ENCODE measurements at regions of chr6 and their contacts with region 1.

Region 1: DNA sequence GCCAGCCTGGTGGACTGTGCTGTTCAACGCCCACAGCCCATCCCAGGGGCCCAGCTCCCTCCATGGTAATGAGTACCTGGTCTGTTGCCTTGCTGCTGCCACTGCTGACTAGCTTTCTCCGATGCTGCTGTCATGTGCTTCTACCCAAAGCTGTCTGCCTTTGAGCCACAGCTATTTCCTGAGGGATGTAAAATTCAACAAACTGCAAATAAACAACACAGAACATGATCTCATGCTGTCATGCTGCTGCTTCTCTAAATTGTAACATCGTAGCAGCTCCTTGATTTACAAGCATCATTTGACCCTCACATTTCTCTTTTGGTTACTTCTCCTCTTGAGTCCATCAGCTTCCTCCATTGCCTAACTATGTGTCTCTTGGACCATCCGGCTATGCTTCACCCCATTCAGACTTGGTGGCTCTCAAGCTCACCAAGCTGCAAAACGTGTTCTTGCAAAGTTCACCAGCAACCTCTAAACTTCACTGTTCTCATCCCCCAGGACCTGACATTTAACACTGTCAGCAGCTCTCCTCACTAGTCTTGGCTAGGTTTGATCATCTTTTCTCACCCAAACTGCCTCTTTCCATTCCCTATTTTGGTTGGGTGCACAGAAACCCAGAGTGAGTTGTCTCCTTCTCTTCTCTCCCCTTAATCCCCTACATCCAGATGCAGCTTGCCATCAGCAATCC is 54.6 kb downstream of the FYN start:
- DNase-seq: no peak
- CTCF ChIP-seq: no peak

Region 2: DNA sequence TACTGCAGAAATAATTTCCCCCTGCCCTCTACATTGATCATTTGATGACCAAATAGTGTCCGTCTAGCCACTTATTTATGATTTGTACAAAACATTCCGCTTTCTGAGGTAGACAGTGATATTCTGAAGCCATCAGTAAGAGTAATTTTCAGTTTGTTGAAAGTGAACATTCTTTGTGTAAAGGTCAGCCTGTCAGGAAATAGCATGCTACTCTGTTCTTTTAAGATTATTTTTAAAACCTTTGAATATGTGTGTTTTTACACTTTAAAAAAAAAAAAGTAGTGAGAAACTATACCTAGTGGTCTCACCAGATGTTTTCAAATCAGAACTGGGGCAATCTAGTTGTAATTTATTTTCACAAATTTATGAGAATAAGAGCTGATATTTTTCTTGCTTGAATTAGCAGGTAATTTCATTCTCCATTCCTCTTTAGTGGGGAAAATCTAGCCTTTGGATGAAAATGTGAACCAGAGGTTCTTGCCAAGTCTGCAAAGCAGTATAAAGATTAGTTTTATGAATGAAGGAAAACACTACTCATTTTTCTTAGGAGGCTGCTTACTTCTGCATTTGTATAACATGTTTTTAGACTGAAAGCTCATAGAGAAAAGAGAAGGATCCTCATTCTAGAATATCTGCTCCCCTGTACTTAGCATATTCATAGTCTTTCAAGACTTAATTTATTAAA is 323.6 kb before region 1 on chr6:
- CTCF ChIA-PET with region 1: no interaction called
- POLR2A ChIA-PET with region 1: no interaction called
- DNase-seq: no peak
- CTCF ChIP-seq: no peak

Region 3: GRCh38 chr6:111829998-111830397 is 11.3 kb after region 1 on chr6:
- CTCF ChIA-PET with region 1: interaction called, 24 read pairs
- POLR2A ChIA-PET with region 1: no interaction called
- DNase-seq: no peak
- CTCF ChIP-seq: no peak

Region 4: GRCh38 chr6:111838749-111839484 is 20.2 kb after region 1 on chr6:
- CTCF ChIA-PET with region 1: interaction called, 10 read pairs
- POLR2A ChIA-PET with region 1: no interaction called
- DNase-seq: no peak
- CTCF ChIP-seq: no peak

Measured in GM10248 (cell line).